ENCODE measurements at regions of chr4 and their contacts with region 1.

Region 1: DNA sequence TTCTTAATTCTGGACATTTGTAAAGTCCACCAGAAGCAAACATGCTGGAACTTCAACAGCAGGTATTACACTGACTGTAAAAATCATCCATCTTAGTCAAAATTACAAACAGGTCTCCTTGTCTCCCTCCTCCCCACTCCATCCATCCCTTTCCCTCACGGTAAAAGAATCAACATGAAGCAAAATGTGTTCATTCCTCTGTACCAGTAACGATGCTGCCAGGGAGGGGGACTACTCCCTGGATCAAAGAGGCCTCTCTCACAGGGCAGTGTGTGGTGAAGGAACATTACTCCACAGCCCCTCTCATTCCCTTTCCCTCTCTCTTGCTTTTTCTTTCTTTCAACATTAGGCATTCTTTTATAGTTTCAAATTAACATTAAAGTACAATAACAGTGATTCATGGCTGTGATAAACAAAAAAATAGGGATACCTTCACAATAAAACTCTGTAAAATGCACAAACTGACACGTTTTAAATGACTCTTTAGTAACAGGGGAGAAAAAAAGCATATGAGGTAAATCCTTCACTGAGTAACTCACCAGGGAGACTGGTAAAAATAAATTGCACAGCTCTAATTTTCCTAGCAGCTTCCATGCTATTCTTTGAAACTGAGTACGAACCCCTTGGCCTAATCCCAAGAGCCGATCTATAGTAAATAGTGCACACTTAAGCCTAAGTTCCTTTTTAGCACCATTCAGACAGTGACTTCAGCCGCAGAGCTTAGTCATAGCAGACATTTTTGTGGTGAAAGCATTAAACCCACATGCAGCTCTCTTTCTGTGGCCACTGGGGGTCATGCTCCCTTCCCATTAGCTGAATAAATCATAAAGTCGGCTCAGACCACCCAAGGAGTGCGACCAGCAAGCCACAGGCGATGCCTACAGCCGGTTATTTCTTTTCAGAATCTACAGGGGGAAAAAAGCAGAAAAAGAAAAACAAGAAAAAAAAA is 215.6 kb upstream of the GYPA start:
- DNase-seq: peak; percentile 88
- H3K4me3 ChIP-seq: no peak overlapping the region
- H3K27ac ChIP-seq: peak overlapping the region; percentile 15
- H3K4me1 ChIP-seq: peaks cover 16% of the 10 kb centered on the region
- H3K27me3 ChIP-seq: no peaks in the 10 kb centered on the region
- CTCF ChIP-seq: peak in 1 of 2 donors; percentile 28
- POLR2A ChIP-seq: no peak

Region 2: DNA sequence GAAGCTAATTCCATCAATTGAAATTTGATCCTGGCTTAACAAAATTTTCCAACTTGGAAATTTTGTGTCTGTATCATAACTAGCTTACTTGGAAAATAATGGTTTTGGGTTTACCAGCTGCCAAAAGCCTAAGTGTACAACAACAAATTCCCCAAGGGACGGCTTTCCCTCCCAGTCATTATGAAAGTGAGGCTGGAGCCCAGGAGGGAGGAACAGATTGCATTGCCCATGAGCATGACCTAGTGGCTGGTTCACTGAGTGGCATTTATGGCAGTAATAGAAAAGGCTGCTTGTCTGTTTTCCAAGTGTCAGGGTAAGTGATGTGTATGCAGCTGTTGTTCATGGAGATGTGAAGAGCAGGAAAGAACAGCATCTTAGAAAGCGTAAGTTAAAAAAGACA is 219.1 kb after region 1 on chr4:
- CTCF ChIA-PET with region 1: interaction called, 5 read pairs
- POLR2A ChIA-PET with region 1: no interaction called
- dilution Hi-C with region 1: no loop called
- intact Hi-C with region 1: loop called (anchors 1 kb)
- DNase-seq: peak; percentile 57
- H3K4me3 ChIP-seq: no peak overlapping the region
- H3K27ac ChIP-seq: no peak overlapping the region
- H3K4me1 ChIP-seq: peaks cover 26% of the 10 kb centered on the region
- H3K27me3 ChIP-seq: no peaks in the 10 kb centered on the region
- CTCF ChIP-seq: peak; percentile 43 to 46
- POLR2A ChIP-seq: no peak

Measured in endothelial cell of umbilical vein (primary cell).